Natural killer cell (primary cell): ENCODE measurements at regions of chr19 and their contacts with region 1.

Region 1: DNA sequence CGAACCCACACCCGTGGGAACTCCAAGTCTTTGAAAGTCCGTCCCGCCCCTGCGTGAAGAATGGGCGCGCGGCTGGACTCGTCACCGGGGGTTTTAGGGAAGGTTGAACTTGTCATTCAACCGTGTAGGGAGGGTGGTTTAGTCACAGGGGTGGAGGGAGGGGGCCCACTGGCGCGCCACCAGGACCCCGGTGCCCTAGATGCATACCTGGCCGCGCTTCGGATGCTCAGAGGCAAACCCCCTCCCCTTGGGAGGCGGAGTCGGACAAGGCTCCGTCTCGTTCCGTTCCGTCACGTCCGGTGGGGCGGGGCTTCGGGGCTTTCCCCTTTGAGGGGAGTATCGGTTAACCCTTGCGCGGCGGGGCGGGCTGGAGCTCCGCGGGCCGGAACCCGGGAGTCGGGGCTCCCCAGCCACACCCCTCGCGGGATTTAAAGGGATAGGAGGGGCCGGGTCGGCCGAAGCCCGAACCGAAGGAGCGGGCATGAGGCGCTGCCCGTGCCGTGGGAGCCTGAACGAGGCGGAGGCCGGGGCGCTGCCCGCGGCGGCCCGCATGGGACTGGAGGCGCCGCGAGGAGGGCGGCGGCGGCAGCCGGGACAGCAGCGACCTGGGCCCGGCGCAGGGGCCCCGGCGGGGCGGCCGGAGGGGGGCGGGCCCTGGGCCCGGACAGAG is at the starts of genes COQ8B and ITPKC:
- DNase-seq: peak; percentile 99 to 100
- ATAC-seq: peak; percentile 69 to 91 (median 76)
- H3K4me3 ChIP-seq: peak within 1 kb of the TSS; percentile 83
- H3K4me3 Mint-ChIP-seq: peak within 1 kb of the TSS; percentile 93
- H3K27ac ChIP-seq: peak within 1 kb of the TSS; percentile 92
- H3K27ac Mint-ChIP-seq: peak within 1 kb of the TSS; percentile 99
- H3K4me1 ChIP-seq: peaks cover 64% of the 10 kb centered on the region
- H3K4me1 Mint-ChIP-seq: peaks cover 51 to 66% of the 10 kb centered on the region in 2 donors
- H3K27me3 ChIP-seq: no peaks in the 10 kb centered on the region
- H3K27me3 Mint-ChIP-seq: no peaks in the 10 kb centered on the region
- CTCF ChIP-seq: no peak
- total RNA-seq, gene COQ8B: 31.8 to 46.7 (median 39.6) TPM
- total RNA-seq, gene ITPKC: 8.7 to 11.1 (median 11.0) TPM

Region 2: GRCh38 chr19:40584007-40584406 is 132.8 kb before region 1 on chr19:
- intact Hi-C with region 1: no loop called
- DNase-seq: no peak
- ATAC-seq: no peak
- H3K4me3 ChIP-seq: no peak overlapping the region
- H3K4me3 Mint-ChIP-seq: no peak overlapping the region
- H3K27ac ChIP-seq: no peak overlapping the region
- H3K27ac Mint-ChIP-seq: peak overlapping the region in 1 of 2 donors; percentile 40
- H3K4me1 ChIP-seq: peaks cover 10% of the 10 kb centered on the region
- H3K4me1 Mint-ChIP-seq: peaks cover 0 to 34% of the 10 kb centered on the region in 2 donors
- H3K27me3 ChIP-seq: no peaks in the 10 kb centered on the region
- H3K27me3 Mint-ChIP-seq: no peaks in the 10 kb centered on the region
- CTCF ChIP-seq: no peak

Region 3: GRCh38 chr19:40674291-40674690 is 42.5 kb before region 1 on chr19:
- intact Hi-C with region 1: loop called (anchors 5 kb)
- DNase-seq: no peak
- ATAC-seq: peak in 2 of 3 donors; percentile 46 to 64
- H3K4me3 ChIP-seq: no peak overlapping the region
- H3K4me3 Mint-ChIP-seq: no peak overlapping the region
- H3K27ac ChIP-seq: peak overlapping the region; percentile 47
- H3K27ac Mint-ChIP-seq: no peak overlapping the region
- H3K4me1 ChIP-seq: peaks cover 26% of the 10 kb centered on the region
- H3K4me1 Mint-ChIP-seq: no peaks in the 10 kb centered on the region
- H3K27me3 ChIP-seq: no peaks in the 10 kb centered on the region
- H3K27me3 Mint-ChIP-seq: no peaks in the 10 kb centered on the region
- CTCF ChIP-seq: no peak

Region 4: GRCh38 chr19:40750059-40750873 is 33.5 kb after region 1 on chr19 and contains the start of gene ACTMAP:
- intact Hi-C with region 1: loop called (anchors 1 kb)
- DNase-seq: peak; percentile 100
- ATAC-seq: peak; percentile 87 to 96 (median 88)
- H3K4me3 ChIP-seq: peak within 1 kb of the TSS; percentile 73
- H3K4me3 Mint-ChIP-seq: peak within 1 kb of the TSS; percentile 99
- H3K27ac ChIP-seq: peak within 1 kb of the TSS; percentile 92
- H3K27ac Mint-ChIP-seq: peak within 1 kb of the TSS; percentile 92 to 95
- H3K4me1 ChIP-seq: peaks cover 52% of the 10 kb centered on the region
- H3K4me1 Mint-ChIP-seq: peaks cover 43 to 53% of the 10 kb centered on the region in 2 donors
- H3K27me3 ChIP-seq: no peaks in the 10 kb centered on the region
- H3K27me3 Mint-ChIP-seq: no peaks in the 10 kb centered on the region
- CTCF ChIP-seq: no peak
- total RNA-seq, gene ACTMAP: 5.9 to 9.6 (median 8.2) TPM

Region 5: DNA sequence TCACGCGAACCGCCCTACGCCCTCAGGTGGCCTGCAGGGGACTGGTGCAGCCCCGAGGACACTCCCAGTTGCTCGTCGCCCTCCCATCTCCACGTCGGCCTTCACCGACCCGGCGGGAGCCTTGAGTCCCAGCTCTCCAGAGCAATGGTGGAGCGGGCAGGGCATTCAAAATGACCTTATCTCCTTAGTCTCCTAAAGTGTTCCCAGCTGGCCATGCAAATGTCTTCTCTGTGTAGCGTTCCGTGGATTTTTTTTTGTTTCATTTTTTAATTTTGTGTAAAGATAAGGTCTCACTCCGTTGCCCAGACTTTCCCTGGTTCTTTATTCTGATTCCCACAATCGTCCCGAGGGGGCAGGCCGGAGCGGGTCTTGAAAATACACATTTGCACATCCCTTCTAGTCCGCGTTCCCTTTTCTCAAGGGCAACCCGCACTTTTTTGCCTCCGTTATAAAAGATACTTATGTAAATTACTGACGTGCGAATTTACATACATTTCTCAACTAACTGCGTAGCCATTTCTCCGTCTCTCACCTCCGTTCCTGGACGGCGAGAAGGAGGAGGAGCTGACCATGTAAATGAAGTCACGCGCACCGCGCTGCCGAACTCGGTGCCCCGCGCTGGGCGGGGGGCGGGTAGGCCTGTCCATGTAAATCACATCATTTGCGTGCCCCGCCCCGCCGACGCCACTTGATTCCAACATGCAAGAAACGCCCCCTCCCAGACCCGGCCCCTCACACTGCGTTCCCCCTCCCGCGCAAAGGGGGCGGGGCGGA is 81.6 kb after region 1 on chr19:
- intact Hi-C with region 1: loop called (anchors 2 kb)
- DNase-seq: peak; percentile 100
- ATAC-seq: peak; percentile 82 to 94 (median 86)
- H3K4me3 ChIP-seq: peak overlapping the region; percentile 55
- H3K4me3 Mint-ChIP-seq: peak overlapping the region; percentile 99
- H3K27ac ChIP-seq: peak overlapping the region; percentile 91
- H3K27ac Mint-ChIP-seq: peak overlapping the region; percentile 100
- H3K4me1 ChIP-seq: peaks cover 51% of the 10 kb centered on the region
- H3K4me1 Mint-ChIP-seq: peaks cover 45 to 53% of the 10 kb centered on the region in 2 donors
- H3K27me3 ChIP-seq: no peaks in the 10 kb centered on the region
- H3K27me3 Mint-ChIP-seq: no peaks in the 10 kb centered on the region
- CTCF ChIP-seq: peak; percentile 47